Psoas muscle (tissue), 8 donors: ENCODE measurements at regions of chr20 and their contacts with region 1.

Region 1: DNA sequence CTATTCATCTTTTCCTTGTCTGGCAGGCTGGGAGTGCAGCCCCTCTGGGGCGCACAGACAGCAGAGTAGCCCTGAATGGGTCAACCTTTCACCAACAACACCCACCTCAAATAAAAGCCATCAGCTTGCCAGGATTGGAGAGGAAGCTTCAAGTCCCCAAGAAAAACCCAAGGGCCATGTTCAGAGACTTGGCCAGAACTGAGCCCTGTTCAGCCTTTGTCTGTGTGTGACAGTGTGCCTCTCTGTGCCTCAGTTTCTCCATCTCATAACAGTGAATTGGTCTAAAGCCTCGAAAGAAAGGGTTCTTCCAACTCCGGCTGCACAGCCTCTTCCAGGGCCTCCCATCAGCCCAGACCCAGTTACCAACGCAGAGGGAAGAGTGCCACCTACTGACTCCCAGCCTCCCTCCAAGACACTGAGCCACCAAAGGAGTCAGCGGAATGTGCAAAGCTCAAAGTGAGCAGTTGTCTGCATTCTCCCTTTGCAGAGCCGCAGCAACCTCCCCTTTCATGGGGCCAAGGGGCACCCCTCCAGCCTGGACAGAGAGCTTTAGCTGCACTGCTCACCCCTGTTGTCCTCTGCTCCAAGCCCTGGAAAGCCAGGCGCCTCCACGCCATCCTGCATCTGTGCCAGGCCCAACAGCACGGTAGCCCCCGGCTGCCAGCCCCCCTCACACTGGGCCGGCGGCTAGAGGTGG is 82.7 kb upstream of the TOP1 start:
- DNase-seq: peak; percentile 35 to 62
- ATAC-seq: peak; percentile 44 to 66 (median 52)
- H3K4me3 ChIP-seq: no peak overlapping the region
- H3K27ac ChIP-seq: no peak overlapping the region
- H3K4me1 ChIP-seq: no peaks in the 10 kb centered on the region
- H3K27me3 ChIP-seq: peaks cover 0 to 19% (median 0%) of the 10 kb centered on the region in 3 donors
- CTCF ChIP-seq: peak; percentile 47

Region 2: DNA sequence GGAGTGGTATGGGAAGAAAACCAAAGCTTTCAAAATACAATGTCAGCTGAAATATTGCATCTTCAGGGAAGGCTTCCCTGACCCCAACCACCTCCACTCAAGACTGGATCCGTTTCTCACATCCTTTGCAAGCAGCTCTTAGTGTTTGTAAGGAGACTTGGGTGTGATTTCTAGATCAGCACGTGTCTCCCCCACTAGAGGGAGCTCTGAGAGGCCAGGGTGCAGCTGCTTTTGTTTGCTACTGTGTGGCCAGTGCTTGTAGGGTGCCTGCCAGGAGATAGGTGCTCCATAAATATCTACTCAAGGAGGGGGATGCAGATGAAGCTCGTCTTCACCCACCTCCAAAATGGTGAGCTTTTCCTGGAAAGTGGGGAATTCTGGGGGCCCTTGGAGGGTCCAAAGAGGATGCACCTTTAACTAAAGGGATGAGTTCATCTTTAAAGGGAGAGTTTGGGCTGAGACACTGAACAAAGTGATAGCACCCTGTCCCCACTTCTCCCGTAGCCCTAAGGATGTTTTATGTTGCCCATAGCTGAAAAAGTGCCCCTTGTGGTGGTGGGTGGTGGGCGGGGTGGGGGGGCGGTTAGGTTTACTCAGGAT is 204.3 kb before region 1 on chr20:
- intact Hi-C with region 1: loop called in 1 of 2 experiments (anchors 5 kb)
- DNase-seq: peak in 1 of 2 donors; percentile 27
- ATAC-seq: peak in 3 of 4 donors; percentile 47 to 67 (median 54)
- H3K4me3 ChIP-seq: no peak overlapping the region
- H3K27ac ChIP-seq: no peak overlapping the region
- H3K4me1 ChIP-seq: no peaks in the 10 kb centered on the region
- H3K27me3 ChIP-seq: peaks cover 0 to 14% (median 0%) of the 10 kb centered on the region in 3 donors
- CTCF ChIP-seq: peak; percentile 62